ENCODE measurements at regions of chr2 and their contacts with region 1.

Region 1: DNA sequence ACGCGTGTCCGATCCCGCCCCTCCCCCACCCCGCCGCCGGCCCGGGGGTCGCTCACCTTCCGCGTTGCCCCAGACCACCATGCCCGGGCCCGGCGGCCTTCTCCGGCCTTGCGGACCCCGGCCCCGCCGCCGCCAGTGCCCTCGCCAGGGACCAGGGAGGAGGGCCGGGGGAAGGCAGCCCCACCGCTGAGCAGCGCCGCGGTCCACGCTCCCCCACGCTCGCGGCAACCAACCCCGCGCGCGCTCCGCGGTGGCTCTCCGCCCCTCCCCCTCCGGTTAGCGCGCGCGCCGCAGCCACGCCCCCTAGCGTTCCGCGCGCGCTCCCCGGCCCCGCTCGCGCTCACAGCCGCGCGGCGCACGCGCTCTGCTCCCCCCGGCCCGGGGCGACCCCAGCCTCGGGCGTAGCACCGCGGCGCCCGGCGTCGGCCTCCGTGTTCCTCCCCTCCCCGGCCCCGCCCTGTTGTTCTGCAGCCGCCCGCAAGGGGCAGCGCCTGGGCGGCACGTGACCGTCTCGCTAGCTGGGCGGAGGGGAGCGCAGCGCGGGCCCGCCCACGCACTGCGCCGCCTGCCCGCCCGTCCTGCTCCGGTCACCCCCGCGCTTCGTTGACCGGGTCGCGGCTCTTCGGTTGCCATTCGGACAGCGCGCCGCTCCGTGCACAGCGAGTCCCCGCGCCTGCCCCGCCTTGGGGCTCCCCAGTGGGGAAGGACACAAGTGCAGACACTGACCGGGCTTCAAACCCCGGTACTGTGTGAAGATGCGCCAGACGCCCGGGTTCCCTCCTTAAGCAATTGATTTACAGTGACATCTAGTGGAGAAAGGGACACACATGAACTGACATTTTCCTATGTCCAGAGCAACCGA is at the start of gene REV1:
- DNase-seq: peak; percentile 87
- H3K4me3 Mint-ChIP-seq: peak within 1 kb of the TSS; percentile 94
- H3K27ac Mint-ChIP-seq: peak within 1 kb of the TSS; percentile 97
- H3K4me1 Mint-ChIP-seq: peaks cover 35% of the 10 kb centered on the region
- H3K27me3 Mint-ChIP-seq: peaks cover 3% of the 10 kb centered on the region
- total RNA-seq, gene REV1: 49.6 and 53.7 TPM in 2 replicates

Region 2: GRCh38 chr2:99141110-99142108 is 348.6 kb before region 1 on chr2 and contains the start of gene C2orf15:
- intact Hi-C with region 1: loop called (anchors 1 kb)
- DNase-seq: peak; percentile 93
- H3K4me3 Mint-ChIP-seq: peak within 1 kb of the TSS; percentile 96
- H3K27ac Mint-ChIP-seq: peak within 1 kb of the TSS; percentile 82
- H3K4me1 Mint-ChIP-seq: peaks cover 10% of the 10 kb centered on the region
- H3K27me3 Mint-ChIP-seq: peaks cover 14% of the 10 kb centered on the region
- total RNA-seq, gene C2orf15: 0.29 TPM in 1 of 2 replicates, not detected in the other

Region 3: GRCh38 chr2:99389371-99389770 is 100.6 kb before region 1 on chr2:
- intact Hi-C with region 1: loop called (anchors 5 kb)
- DNase-seq: no peak
- H3K4me3 Mint-ChIP-seq: no peak overlapping the region
- H3K27ac Mint-ChIP-seq: no peak overlapping the region
- H3K4me1 Mint-ChIP-seq: peaks cover 9% of the 10 kb centered on the region
- H3K27me3 Mint-ChIP-seq: no peaks in the 10 kb centered on the region

Region 4: GRCh38 chr2:99442837-99443236 is 47.2 kb before region 1 on chr2:
- intact Hi-C with region 1: loop called (anchors 1 kb)
- DNase-seq: no peak
- H3K4me3 Mint-ChIP-seq: no peak overlapping the region
- H3K27ac Mint-ChIP-seq: no peak overlapping the region
- H3K4me1 Mint-ChIP-seq: peaks cover 15% of the 10 kb centered on the region
- H3K27me3 Mint-ChIP-seq: no peaks in the 10 kb centered on the region